Posterior vena cava (tissue), 2 donors: ENCODE measurements at regions of chr11 and their contacts with region 1.

Region 1: DNA sequence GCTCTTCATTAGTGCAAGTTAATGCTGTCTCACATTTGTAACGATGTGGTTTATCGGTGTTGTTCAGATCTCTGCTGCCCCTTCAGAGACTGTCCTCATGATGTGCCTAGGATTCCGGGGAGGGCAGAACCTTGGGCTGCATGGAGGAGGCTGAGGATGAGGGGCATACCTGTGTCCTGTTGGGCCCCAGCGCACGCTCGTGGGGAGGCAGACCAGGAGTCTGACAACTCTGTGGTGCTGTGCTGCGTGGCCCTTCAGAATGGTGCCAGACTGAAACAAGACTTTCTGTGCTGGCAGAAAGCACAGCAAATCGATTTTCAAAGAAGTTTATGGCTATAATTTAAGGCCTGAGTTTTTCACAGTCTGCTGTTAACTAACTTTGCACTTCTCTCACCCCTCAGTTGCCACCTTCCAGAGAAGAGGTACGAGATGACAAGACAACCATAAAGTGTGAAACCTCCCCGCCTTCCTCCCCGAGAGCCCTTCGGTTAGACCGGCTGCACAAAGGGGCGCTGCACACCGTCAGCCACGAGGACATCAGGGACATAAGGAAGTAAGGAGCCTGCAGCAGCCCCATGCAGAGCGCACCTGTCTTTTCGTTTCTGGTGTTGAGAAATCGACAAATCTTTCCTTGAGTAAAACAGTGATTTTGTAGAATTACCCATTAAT is 44.3 kb upstream of the CTTN start:
- DNase-seq: no peak

Region 2: GRCh38 chr11:70303070-70303469 is 51.0 kb before region 1 on chr11:
- intact Hi-C with region 1: no loop called
- DNase-seq: peak; percentile 88

Region 3: DNA sequence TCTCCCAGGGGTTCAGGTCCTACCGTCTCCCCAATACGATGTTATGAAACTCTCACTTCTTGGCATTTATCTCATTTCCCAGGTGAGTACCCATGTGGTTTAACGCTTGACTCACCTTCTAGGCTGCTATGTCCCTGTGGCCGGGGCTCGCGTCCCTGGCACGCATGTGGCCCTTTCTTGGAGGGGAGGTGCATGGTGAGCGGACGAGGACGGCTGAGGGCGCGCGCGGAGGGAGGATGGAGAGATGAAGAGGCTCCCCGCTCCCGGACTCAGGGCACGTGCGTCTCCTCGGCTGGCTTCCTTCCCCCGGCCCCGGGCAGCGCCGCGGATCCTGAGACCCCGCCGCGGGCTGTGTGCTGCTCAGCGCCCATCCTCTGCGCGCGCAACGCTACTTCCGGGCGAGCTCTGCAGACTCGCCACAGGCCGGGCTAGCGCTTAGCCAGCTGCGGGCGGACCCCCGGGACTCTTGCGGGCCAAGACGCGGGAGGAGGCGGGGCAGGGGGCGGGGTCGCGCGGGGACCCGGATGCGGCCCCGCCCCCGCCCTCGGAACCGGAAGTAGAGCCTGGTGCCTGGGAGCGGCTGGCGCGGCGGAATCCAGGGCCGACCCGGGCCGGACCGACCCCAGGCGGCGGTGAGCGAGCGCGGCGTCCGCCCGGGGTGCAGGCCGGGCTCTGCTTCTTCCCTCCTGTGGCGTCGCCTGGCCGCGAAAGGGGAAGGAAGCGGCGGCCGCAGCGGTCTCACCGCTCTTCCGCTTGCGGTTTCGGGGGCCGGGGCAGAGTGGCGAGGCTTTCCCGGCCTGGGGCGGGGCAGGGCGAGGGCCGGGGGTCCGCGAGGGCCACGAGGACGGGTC is 44.2 kb after region 1 on chr11 and contains the start of gene CTTN:
- intact Hi-C with region 1: loop called in 1 of 2 experiments (anchors 1 kb)
- DNase-seq: peak; percentile 94
- total RNA-seq, gene CTTN: 192 to 195 TPM